CD4-positive, alpha-beta memory T cell (primary cell): ENCODE measurements at regions of chr16 and their contacts with region 1.

Region 1: GRCh38 chr16:66406534-66407221 is 20.4 kb upstream of the BEAN1 start:
- DNase-seq: peak; percentile 76 to 85 (median 81)
- H3K4me3 ChIP-seq: peak overlapping the region; percentile 57 to 62
- H3K4me3 Mint-ChIP-seq: peak overlapping the region; percentile 86 to 94 (median 89)
- H3K27ac ChIP-seq: no peak overlapping the region
- H3K27ac Mint-ChIP-seq: peak overlapping the region in 6 of 7 donors; percentile 64 to 76 (median 68)
- H3K4me1 ChIP-seq: peaks cover 32% of the 10 kb centered on the region
- H3K4me1 Mint-ChIP-seq: peaks cover 17 to 37% (median 28%) of the 10 kb centered on the region in 4 donors
- H3K27me3 ChIP-seq: no peaks in the 10 kb centered on the region
- H3K27me3 Mint-ChIP-seq: peaks cover 6% of the 10 kb centered on the region in 2 donors

Region 2: DNA sequence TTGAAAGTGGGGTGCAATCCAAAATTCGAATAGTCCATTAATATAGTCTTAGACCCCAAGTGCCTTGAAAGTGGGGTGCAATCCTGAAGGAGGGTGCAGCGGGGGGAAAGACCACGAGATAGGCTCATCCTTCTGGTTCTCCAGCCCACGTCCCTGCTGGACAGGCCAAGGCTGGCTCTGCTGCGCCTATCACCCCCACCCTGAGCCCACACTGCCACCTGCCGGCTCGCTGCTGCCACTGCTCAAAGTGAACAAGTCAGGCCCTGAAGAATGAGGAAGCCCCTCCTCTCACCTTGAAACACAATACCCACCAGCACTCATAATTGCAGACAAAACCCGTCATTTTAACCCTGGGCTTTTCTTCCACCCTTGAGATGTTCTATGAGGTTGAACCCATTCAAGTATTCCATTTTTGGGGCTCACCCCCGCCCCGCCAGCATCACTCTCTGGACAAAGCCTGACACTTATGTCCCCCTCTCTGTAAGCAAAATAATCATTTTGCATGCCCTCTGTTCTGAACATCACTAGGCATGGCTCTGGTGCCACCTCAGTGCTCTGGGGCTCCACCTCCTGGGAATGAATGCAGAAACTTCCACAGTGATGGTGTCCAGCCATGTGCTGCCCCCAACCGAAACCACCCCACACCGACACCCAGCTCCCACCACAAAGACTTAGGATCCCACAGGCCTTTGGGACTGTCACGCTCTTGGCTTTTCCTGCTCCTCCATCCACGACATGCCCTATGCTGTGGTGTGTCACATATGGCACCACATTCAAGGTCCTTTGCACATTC is 77.2 kb after region 1 on chr16:
- CTCF ChIA-PET with region 1: interaction called, 83 read pairs
- POLR2A ChIA-PET with region 1: interaction called, 3 read pairs
- intact Hi-C with region 1: loop called (anchors 1 kb)
- DNase-seq: peak; percentile 60 to 69 (median 64)
- H3K4me3 ChIP-seq: no peak overlapping the region
- H3K4me3 Mint-ChIP-seq: no peak overlapping the region
- H3K27ac ChIP-seq: no peak overlapping the region
- H3K27ac Mint-ChIP-seq: peak overlapping the region in 5 of 7 donors; percentile 27 to 68 (median 61)
- H3K4me1 ChIP-seq: peaks cover 16% of the 10 kb centered on the region
- H3K4me1 Mint-ChIP-seq: peaks cover 10 to 24% (median 13%) of the 10 kb centered on the region in 4 donors
- H3K27me3 ChIP-seq: no peaks in the 10 kb centered on the region
- H3K27me3 Mint-ChIP-seq: no peaks in the 10 kb centered on the region

Region 3: GRCh38 chr16:66521951-66522771 is 115.5 kb after region 1 on chr16:
- CTCF ChIA-PET with region 1: interaction called, 16 read pairs
- POLR2A ChIA-PET with region 1: interaction called, 14 read pairs
- intact Hi-C with region 1: no loop called
- DNase-seq: peak; percentile 71 to 96 (median 77)
- H3K4me3 ChIP-seq: peak overlapping the region; percentile 32 to 57
- H3K4me3 Mint-ChIP-seq: peak overlapping the region; percentile 73 to 86 (median 79)
- H3K27ac ChIP-seq: peak overlapping the region; percentile 51
- H3K27ac Mint-ChIP-seq: peak overlapping the region; percentile 89 to 98 (median 95)
- H3K4me1 ChIP-seq: peaks cover 82% of the 10 kb centered on the region
- H3K4me1 Mint-ChIP-seq: peaks cover 64 to 100% (median 82%) of the 10 kb centered on the region in 4 donors
- H3K27me3 ChIP-seq: no peaks in the 10 kb centered on the region
- H3K27me3 Mint-ChIP-seq: no peaks in the 10 kb centered on the region

Region 4: GRCh38 chr16:66639091-66639885 is 232.6 kb after region 1 on chr16:
- CTCF ChIA-PET with region 1: no interaction called
- POLR2A ChIA-PET with region 1: no interaction called
- intact Hi-C with region 1: no loop called
- DNase-seq: no peak
- H3K4me3 ChIP-seq: no peak overlapping the region
- H3K4me3 Mint-ChIP-seq: no peak overlapping the region
- H3K27ac ChIP-seq: no peak overlapping the region
- H3K27ac Mint-ChIP-seq: no peak overlapping the region
- H3K4me1 ChIP-seq: no peaks in the 10 kb centered on the region
- H3K4me1 Mint-ChIP-seq: no peaks in the 10 kb centered on the region
- H3K27me3 ChIP-seq: no peaks in the 10 kb centered on the region
- H3K27me3 Mint-ChIP-seq: peaks cover 0 to 3% of the 10 kb centered on the region in 2 donors

Region 5: GRCh38 chr16:66650707-66651473 is 244.2 kb after region 1 on chr16:
- CTCF ChIA-PET with region 1: interaction called, 7 read pairs
- POLR2A ChIA-PET with region 1: interaction called, 4 read pairs
- intact Hi-C with region 1: loop called (anchors 2 kb)
- DNase-seq: peak; percentile 75 to 84 (median 80)
- H3K4me3 ChIP-seq: peak overlapping the region in 1 of 2 donors; percentile 25
- H3K4me3 Mint-ChIP-seq: peak overlapping the region; percentile 50 to 90 (median 74)
- H3K27ac ChIP-seq: no peak overlapping the region
- H3K27ac Mint-ChIP-seq: peak overlapping the region in 6 of 7 donors; percentile 2 to 90 (median 60)
- H3K4me1 ChIP-seq: peaks cover 6% of the 10 kb centered on the region
- H3K4me1 Mint-ChIP-seq: peaks cover 6 to 11% (median 10%) of the 10 kb centered on the region in 4 donors
- H3K27me3 ChIP-seq: no peaks in the 10 kb centered on the region
- H3K27me3 Mint-ChIP-seq: peaks cover 0 to 6% of the 10 kb centered on the region in 2 donors

Region 6: GRCh38 chr16:66740010-66740409 is 333.3 kb after region 1 on chr16:
- CTCF ChIA-PET with region 1: interaction called, 27 read pairs
- POLR2A ChIA-PET with region 1: interaction called, 3 read pairs
- intact Hi-C with region 1: loop called (anchors 1 kb)
- DNase-seq: peak in 4 of 5 donors; percentile 14 to 31 (median 28)
- H3K4me3 ChIP-seq: no peak overlapping the region
- H3K4me3 Mint-ChIP-seq: peak overlapping the region in 1 of 8 donors; percentile 47
- H3K27ac ChIP-seq: no peak overlapping the region
- H3K27ac Mint-ChIP-seq: peak overlapping the region in 5 of 7 donors; percentile 30 to 77 (median 49)
- H3K4me1 ChIP-seq: peaks cover 18% of the 10 kb centered on the region
- H3K4me1 Mint-ChIP-seq: peaks cover 13 to 24% (median 16%) of the 10 kb centered on the region in 4 donors
- H3K27me3 ChIP-seq: no peaks in the 10 kb centered on the region
- H3K27me3 Mint-ChIP-seq: no peaks in the 10 kb centered on the region

Region 7: DNA sequence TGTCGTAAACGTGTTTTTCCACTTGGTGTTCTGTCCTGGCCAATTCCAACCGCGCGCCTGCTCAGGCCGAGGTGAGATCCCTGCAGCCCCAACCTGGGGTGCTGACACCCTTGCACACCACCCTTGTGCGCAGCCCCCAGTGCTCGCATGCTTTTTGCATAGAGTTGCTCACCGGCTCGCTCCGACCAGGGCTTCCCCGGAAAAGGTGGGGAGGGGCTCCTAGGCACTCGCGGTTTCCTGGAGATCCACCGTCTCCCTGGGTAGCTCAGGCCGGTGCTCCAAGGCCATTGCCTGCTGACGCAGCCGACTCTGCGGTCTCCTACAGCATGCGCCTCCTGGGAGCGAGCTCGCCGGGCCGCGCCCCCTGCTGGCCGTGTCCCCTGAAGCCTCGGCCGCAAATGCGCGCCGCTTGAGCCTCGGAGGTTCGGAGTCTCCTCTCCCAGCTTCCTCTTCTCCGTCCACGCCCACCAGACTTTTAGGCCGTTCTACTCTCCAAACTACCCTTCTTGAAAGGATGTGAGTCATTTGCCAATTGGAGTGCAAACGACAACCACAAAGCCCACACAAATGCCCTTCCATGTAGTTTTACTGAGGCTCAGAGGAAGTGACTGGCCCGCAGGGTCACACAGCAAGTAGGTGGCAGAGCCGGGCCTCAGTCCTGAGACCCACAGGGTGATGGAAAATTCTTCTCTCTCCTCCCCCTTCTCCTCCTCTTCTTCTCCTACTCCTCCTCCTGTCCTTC is 466.4 kb after region 1 on chr16:
- CTCF ChIA-PET with region 1: interaction called, 49 read pairs
- POLR2A ChIA-PET with region 1: interaction called, 3 read pairs
- intact Hi-C with region 1: loop called (anchors 1 kb)
- DNase-seq: peak; percentile 80 to 94 (median 82)
- H3K4me3 ChIP-seq: peak overlapping the region in 1 of 2 donors; percentile 52
- H3K4me3 Mint-ChIP-seq: peak overlapping the region; percentile 61 to 90 (median 82)
- H3K27ac ChIP-seq: peak overlapping the region; percentile 36
- H3K27ac Mint-ChIP-seq: peak overlapping the region; percentile 75 to 95 (median 86)
- H3K4me1 ChIP-seq: peaks cover 22% of the 10 kb centered on the region
- H3K4me1 Mint-ChIP-seq: peaks cover 18 to 37% (median 23%) of the 10 kb centered on the region in 4 donors
- H3K27me3 ChIP-seq: no peaks in the 10 kb centered on the region
- H3K27me3 Mint-ChIP-seq: no peaks in the 10 kb centered on the region